Common myeloid progenitor, CD34-positive (primary cell): ENCODE measurements at regions of chr3 and their contacts with region 1.

Region 1: GRCh38 chr3:149879872-149880271 is 66.9 kb downstream of the RNF13 start:
- DNase-seq: peak; percentile 45 to 65 (median 58)
- H3K4me3 ChIP-seq: no peak overlapping the region
- H3K27ac ChIP-seq: no peak overlapping the region
- H3K4me1 ChIP-seq: peaks cover 0 to 9% (median 3%) of the 10 kb centered on the region in 4 experiments
- H3K27me3 ChIP-seq: no peaks in the 10 kb centered on the region

Region 2: GRCh38 chr3:149898771-149899170 is 18.9 kb after region 1 on chr3:
- CTCF ChIA-PET with region 1: interaction called, 11 read pairs
- POLR2A ChIA-PET with region 1: no interaction called
- DNase-seq: no peak
- H3K4me3 ChIP-seq: no peak overlapping the region
- H3K27ac ChIP-seq: no peak overlapping the region
- H3K4me1 ChIP-seq: no peaks in the 10 kb centered on the region
- H3K27me3 ChIP-seq: no peaks in the 10 kb centered on the region

Region 3: GRCh38 chr3:149906036-149906435 is 26.2 kb after region 1 on chr3:
- CTCF ChIA-PET with region 1: interaction called, 10 read pairs
- POLR2A ChIA-PET with region 1: no interaction called
- DNase-seq: no peak
- H3K4me3 ChIP-seq: no peak overlapping the region
- H3K27ac ChIP-seq: no peak overlapping the region
- H3K4me1 ChIP-seq: no peaks in the 10 kb centered on the region
- H3K27me3 ChIP-seq: no peaks in the 10 kb centered on the region